Heart left ventricle (tissue), 16 donors: ENCODE measurements at regions of chr13 and their contacts with region 1.

Region 1: DNA sequence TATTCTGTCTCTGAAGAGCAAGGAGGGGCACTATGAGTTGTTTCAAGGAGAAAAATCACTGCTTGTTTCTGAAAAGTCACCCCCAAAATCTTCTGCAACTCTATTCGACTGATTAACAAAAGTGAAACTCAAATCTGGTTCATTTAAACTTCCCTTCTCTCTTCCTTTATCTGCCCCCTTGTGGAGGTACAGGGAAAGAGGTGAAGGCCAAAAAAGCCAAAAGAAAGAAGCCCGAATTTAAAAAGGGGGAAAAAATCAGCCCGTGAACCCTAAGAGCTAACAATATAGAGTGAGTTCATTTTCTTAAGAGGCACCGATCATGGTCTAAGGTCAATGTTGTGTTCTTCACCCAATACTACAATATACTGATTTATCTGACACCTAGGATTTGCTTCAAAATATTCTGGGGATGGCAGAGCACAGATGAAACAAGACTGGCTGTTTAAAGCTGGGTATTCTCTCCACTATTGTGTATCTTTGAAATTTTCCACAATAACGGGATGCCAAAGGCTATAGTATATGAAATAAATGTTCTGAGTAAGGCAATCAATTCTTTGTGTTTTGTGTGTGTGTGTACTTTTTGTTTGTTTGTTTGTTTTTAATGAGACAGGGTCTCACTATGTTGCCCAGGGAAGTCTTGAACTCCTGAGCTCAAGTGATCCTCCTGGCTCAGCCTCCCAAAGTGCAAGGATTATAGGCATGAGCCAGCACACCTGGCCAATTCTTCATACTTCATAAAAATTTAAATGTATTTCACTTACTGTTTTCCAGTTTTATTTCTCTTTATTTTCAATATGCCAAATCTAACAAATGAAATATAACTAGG is 55.0 kb upstream of the EEF1AKMT1 start:
- DNase-seq: peak in 2 of 5 donors; percentile 30
- ATAC-seq: peak in 3 of 4 donors; percentile 30 to 40 (median 39)
- H3K4me3 ChIP-seq: peak overlapping the region in 9 of 12 donors; percentile 22 to 53 (median 34)
- H3K27ac ChIP-seq: peak overlapping the region in 11 of 12 donors; percentile 9 to 69 (median 50)
- H3K4me1 ChIP-seq: peaks cover 0 to 40% (median 8%) of the 10 kb centered on the region in 12 donors
- H3K27me3 ChIP-seq: no peaks in the 10 kb centered on the region
- CTCF ChIP-seq: peak; percentile 61 to 89 (median 81)
- POLR2A ChIP-seq: no peak

Region 2: DNA sequence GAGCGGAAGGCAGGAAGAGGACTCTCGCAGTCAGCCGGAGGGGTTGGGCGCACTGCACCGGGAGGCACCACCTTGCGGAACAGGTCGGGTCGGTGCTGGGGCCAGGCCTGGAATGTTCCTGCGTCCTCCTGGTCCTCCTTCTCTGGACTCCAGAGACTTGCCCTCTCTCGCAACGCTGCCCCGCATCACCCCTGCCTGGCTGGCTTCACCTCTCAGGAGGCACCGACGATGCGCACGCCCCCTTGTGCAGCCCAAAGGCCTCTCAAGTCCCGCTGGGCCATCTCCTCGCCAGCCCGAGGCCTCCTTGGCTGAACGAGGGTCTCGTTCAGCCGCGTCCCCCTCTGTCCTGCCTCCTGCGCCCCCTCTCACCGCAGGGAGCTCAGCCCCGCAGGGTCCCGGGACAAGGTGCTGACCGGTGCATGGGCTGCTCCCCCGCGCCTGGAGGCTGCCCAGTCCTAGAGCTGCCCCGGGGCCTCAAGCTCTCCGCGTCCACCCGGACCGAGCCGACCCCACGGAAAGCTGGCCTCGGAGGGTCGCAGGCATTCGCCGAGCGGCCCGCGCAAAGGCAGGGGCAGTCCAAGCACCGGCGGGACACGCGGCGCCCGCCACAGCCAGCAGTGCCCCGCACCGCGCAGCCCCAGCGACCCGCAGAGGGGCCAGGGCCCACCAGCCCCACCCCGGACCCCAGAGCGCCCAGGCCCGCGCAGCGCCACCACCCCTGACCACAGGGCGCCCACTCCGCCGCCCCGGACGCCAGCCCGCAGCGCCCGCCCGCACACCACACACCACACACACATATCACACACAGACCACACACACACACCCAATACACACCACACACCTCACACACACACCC is 436.9 kb before region 1 on chr13:
- intact Hi-C with region 1: no loop called
- DNase-seq: peak in 1 of 5 donors; percentile 57
- ATAC-seq: no peak
- H3K4me3 ChIP-seq: no peak overlapping the region
- H3K27ac ChIP-seq: no peak overlapping the region
- H3K4me1 ChIP-seq: peaks cover 0 to 7% (median 0%) of the 10 kb centered on the region in 12 donors
- H3K27me3 ChIP-seq: no peaks in the 10 kb centered on the region
- CTCF ChIP-seq: no peak
- POLR2A ChIP-seq: no peak

Region 3: DNA sequence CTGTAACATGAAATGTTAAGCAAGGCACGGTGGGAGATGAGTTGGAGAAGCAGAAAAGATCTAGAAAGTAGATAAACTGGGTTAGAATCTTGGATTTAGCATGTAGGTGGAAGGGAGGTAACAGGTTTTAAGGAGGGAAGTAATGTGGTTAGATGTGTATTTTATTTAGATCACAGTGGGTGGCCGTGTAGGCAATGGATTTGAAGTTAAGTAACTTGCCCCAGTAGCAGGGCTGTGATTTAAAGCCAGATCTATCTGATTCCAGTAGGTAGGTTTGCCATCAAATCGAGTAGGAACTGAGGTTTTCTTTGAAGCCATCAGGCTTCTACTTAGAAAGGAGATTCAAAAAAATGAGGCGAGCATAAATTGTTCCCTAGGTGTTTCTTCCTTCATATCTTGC is 175.8 kb before region 1 on chr13:
- intact Hi-C with region 1: no loop called
- DNase-seq: no peak
- ATAC-seq: no peak
- H3K4me3 ChIP-seq: no peak overlapping the region
- H3K27ac ChIP-seq: no peak overlapping the region
- H3K4me1 ChIP-seq: no peaks in the 10 kb centered on the region
- H3K27me3 ChIP-seq: no peaks in the 10 kb centered on the region
- CTCF ChIP-seq: no peak
- POLR2A ChIP-seq: no peak

Region 4: GRCh38 chr13:20703780-20704445 is 124.8 kb before region 1 on chr13:
- intact Hi-C with region 1: loop called in 1 of 10 experiments (anchors 10 kb)
- DNase-seq: peak; percentile 67 to 87 (median 79)
- ATAC-seq: peak; percentile 71 to 91 (median 85)
- H3K4me3 ChIP-seq: peak overlapping the region in 11 of 12 donors; percentile 16 to 74 (median 58)
- H3K27ac ChIP-seq: peak overlapping the region in 2 of 12 donors; percentile 34 to 63
- H3K4me1 ChIP-seq: peaks cover 0 to 17% (median 5%) of the 10 kb centered on the region in 12 donors
- H3K27me3 ChIP-seq: peaks cover 0 to 25% (median 0%) of the 10 kb centered on the region in 9 donors
- CTCF ChIP-seq: peak; percentile 7 to 66 (median 42)
- POLR2A ChIP-seq: no peak

Region 5: DNA sequence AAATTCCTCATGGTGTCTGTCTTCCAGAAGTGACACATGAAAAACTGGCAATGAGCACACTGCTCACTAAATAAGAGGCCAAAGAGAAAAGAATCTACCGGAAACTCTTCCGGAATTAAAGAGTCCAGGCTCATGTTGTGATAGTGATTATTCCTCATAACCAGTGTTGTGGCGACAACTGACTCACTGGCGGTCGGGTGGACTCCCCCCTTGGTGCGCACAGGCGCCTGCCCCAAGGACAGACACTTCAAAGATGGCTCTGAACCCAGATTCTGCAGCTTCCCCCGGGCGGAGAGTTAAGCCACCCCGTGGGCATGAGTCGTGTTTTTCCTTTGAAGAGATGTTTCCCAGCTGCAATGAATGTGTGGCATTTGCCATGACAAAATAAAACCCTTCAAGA is 115.0 kb before region 1 on chr13:
- intact Hi-C with region 1: loop called (anchors 1 to 10 kb)
- DNase-seq: peak in 2 of 5 donors; percentile 59 to 63
- ATAC-seq: peak in 2 of 4 donors; percentile 49 to 56
- H3K4me3 ChIP-seq: peak overlapping the region in 3 of 12 donors; percentile 7 to 32 (median 14)
- H3K27ac ChIP-seq: peak overlapping the region in 11 of 12 donors; percentile 36 to 92 (median 65)
- H3K4me1 ChIP-seq: peaks cover 0 to 41% (median 19%) of the 10 kb centered on the region in 12 donors
- H3K27me3 ChIP-seq: no peaks in the 10 kb centered on the region
- CTCF ChIP-seq: no peak
- POLR2A ChIP-seq: no peak

Region 6: DNA sequence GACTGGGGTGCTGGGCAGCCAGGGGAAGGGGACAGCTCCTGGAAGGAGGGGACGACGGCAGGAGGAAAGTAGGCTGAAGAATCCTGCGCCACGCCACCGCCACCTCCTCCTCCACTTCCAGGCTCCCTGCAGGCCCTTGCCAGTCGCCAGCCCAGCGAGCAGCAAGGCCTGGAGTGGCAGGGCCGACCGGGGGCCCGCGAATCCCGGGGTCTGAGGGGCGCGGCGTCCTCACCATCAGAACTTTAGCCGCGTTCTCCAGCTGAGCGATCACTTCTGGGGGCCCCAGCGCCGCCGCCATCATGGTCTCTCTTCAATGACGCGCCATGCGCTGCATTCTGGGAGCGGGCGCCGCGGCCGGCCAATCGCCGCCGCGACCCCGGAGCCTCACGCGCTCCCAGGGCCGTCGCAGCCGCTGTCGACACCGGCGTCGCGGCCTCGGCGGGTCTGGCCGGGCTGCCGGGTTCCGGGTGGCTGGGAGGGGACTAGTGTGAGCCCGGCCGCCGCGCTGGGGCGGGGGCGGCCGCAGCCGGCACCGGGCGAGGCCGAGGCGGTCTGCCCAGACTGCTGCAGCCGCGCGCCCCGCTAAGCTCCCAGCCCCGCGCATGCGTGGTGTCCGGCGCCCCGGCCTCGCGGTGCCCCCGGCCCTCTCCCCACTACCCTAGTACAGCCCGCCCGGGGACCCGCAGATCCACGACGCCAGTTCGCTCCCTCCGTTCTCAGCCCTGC is 73.8 kb after region 1 on chr13 and contains the start of gene XPO4:
- intact Hi-C with region 1: loop called in 1 of 10 experiments (anchors 5 kb)
- DNase-seq: peak; percentile 81 to 91 (median 84)
- ATAC-seq: peak; percentile 83 to 98 (median 97)
- H3K4me3 ChIP-seq: peak within 1 kb of the TSS; percentile 72 to 99 (median 92)
- H3K27ac ChIP-seq: peak within 1 kb of the TSS; percentile 86 to 97 (median 92)
- H3K4me1 ChIP-seq: peaks cover 0 to 24% (median 15%) of the 10 kb centered on the region in 12 donors
- H3K27me3 ChIP-seq: no peaks in the 10 kb centered on the region
- CTCF ChIP-seq: no peak
- POLR2A ChIP-seq: peak in 1 of 2 donors; percentile 52
- total RNA-seq, gene XPO4: 18.5 to 53.7 (median 28.4) TPM